ENCODE measurements at regions of chr1 and their contacts with region 1.

Region 1: DNA sequence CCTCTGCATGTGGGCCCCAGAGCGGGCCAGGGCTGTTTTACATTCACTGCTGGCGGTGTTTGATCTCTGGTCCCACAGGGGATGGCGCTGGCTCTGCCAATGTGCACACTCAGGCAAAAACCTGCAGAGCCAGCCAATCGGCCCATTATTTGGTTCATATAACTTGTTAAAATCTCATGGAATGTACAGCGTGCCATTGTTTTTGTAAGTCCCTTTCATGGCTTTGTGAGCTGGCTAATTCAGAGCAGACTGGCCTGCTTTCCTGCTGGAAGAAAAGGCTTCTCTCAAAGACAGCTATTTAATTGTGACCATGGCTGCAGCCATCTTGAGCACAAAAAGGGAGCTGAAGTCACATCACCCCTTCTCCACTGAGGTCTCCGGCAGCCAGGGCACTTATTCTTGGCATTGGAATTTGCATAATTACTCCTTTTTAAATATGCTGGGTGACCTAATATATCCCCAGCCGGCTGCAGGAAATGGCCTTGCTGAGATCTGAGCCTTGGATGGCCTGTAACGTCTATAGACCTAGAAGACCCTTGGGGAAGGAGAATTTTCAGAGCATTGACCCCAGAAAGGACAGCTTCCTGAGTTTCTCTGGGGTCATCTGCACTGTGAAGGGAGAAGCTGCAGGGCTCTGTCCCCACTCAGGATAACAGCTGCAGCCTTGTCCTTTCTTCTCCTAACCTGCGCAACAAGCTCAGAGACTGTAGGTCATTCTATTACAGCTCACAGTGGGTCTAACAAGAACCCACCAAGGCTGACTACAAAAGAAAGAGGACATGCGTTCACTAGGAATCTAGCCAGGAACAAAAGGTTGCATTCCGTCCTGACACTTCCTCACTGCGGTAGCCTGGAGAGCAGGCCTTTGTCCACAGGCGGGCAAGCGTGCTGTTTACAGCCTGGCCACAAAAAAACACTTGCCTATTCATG is 45.8 kb downstream of the BCAR3 start:
- DNase-seq: peak in 1 of 2 donors; percentile 33
- ATAC-seq: peak; percentile 35 to 85 (median 54)
- H3K4me3 ChIP-seq: no peak overlapping the region
- H3K27ac ChIP-seq: peak overlapping the region in 9 of 10 donors; percentile 1 to 61 (median 55)
- H3K4me1 ChIP-seq: peaks cover 0 to 26% (median 10%) of the 10 kb centered on the region in 9 donors
- H3K27me3 ChIP-seq: no peaks in the 10 kb centered on the region
- CTCF ChIP-seq: peak in 1 of 9 donors; percentile 11

Region 2: DNA sequence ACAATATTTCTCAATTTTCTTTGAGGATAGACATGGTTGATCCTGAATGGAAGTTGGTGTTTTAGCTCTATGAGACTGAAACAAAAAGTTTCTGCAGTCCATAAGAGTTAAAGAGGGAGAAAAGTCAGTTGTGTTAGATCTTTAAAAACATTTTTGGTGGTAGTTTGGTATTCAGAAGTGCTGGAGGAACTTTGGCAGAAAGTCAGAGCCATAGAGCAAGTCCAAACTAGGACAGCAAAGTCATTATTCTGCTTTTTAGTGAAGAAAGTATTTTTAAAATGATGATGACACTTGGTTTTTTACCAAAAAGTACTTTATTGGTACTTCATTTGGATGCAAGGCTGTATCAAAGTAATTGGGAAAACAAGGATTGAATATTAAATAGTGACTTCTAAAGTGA is 146.1 kb before region 1 on chr1:
- intact Hi-C with region 1: no loop called
- DNase-seq: no peak
- ATAC-seq: no peak
- H3K4me3 ChIP-seq: no peak overlapping the region
- H3K27ac ChIP-seq: no peak overlapping the region
- H3K4me1 ChIP-seq: peaks cover 0 to 40% (median 14%) of the 10 kb centered on the region in 9 donors
- H3K27me3 ChIP-seq: no peaks in the 10 kb centered on the region
- CTCF ChIP-seq: no peak

Region 3: GRCh38 chr1:93579891-93580290 is 56.0 kb before region 1 on chr1:
- intact Hi-C with region 1: no loop called
- DNase-seq: peak in 1 of 2 donors; percentile 34
- ATAC-seq: peak in 6 of 8 donors; percentile 12 to 55 (median 30)
- H3K4me3 ChIP-seq: no peak overlapping the region
- H3K27ac ChIP-seq: peak overlapping the region in 8 of 10 donors; percentile 25 to 63 (median 44)
- H3K4me1 ChIP-seq: peaks cover 7 to 68% (median 46%) of the 10 kb centered on the region in 9 donors
- H3K27me3 ChIP-seq: no peaks in the 10 kb centered on the region
- CTCF ChIP-seq: no peak

Region 4: DNA sequence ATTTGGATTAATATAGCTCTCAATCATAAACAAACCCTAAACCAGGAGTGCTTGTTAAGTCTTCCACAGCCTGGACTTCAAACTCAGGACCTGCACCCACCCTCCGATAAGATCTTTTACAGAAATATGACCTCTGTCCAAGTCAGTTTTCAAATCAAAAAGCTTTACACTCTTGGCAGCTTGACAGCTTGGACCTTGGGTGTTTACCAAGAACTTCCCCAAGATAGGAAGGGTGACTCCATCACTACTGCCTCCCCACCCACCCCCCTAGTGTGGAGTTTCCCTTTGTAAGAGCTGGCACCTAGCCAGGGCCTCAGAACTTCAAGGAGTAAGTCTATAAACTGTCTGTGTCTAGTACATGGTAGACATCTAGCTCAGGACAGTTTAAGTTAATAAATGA is 36.2 kb after region 1 on chr1:
- intact Hi-C with region 1: loop called in 4 of 10 experiments (anchors 2 to 5 kb)
- DNase-seq: peak; percentile 61 to 88
- ATAC-seq: peak; percentile 44 to 80 (median 66)
- H3K4me3 ChIP-seq: peak overlapping the region in 1 of 10 donors; percentile 3
- H3K27ac ChIP-seq: peak overlapping the region in 9 of 10 donors; percentile 21 to 78 (median 55)
- H3K4me1 ChIP-seq: peaks cover 39 to 100% (median 93%) of the 10 kb centered on the region in 9 donors
- H3K27me3 ChIP-seq: no peaks in the 10 kb centered on the region
- CTCF ChIP-seq: no peak

Measured in heart right ventricle (tissue), 16 donors.